ENCODE measurements at regions of chr21 and their contacts with region 1.

Region 1: GRCh38 chr21:45270306-45270821 is 17.3 kb downstream of the POFUT2 start:
- DNase-seq: peak; percentile 47
- ATAC-seq: no peak
- H3K4me3 Mint-ChIP-seq: no peak overlapping the region
- H3K27ac Mint-ChIP-seq: no peak overlapping the region
- H3K4me1 Mint-ChIP-seq: peaks cover 16% of the 10 kb centered on the region
- H3K27me3 Mint-ChIP-seq: no peaks in the 10 kb centered on the region

Region 2: GRCh38 chr21:45228171-45228641 is 42.2 kb before region 1 on chr21:
- CTCF ChIA-PET with region 1: no interaction called
- POLR2A ChIA-PET with region 1: no interaction called
- intact Hi-C with region 1: loop called in 1 of 2 experiments (anchors 5 kb)
- DNase-seq: peak; percentile 90
- ATAC-seq: peak; percentile 91
- H3K4me3 Mint-ChIP-seq: no peak overlapping the region
- H3K27ac Mint-ChIP-seq: no peak overlapping the region
- H3K4me1 Mint-ChIP-seq: peaks cover 48% of the 10 kb centered on the region
- H3K27me3 Mint-ChIP-seq: no peaks in the 10 kb centered on the region

Region 3: GRCh38 chr21:45248893-45249381 is 21.4 kb before region 1 on chr21:
- CTCF ChIA-PET with region 1: no interaction called
- POLR2A ChIA-PET with region 1: no interaction called
- intact Hi-C with region 1: no loop called
- DNase-seq: no peak
- ATAC-seq: no peak
- H3K4me3 Mint-ChIP-seq: no peak overlapping the region
- H3K27ac Mint-ChIP-seq: no peak overlapping the region
- H3K4me1 Mint-ChIP-seq: no peaks in the 10 kb centered on the region
- H3K27me3 Mint-ChIP-seq: peaks cover 2% of the 10 kb centered on the region